Right cardiac atrium (tissue), 5 donors: ENCODE measurements at regions of chr22 and their contacts with region 1.

Region 1: DNA sequence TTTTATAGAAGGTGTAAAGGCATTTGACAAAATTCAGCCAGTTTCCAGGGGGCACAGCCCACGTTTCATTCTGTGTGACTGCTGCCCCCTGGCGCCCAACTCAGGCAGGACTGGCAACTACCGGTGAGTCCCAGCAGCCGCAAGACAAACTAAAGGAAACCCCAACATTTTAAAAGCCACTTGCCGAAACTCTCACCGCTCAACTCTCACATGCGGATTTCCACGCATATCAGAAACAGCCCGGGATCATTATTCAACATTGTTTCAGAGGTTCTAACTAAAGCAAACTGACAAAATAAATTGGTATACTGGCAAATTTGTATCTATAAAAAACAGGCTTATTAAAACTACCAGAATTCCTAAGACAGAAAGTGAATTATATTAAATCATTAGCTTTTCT is 48.2 kb downstream of the MORC2 start:
- DNase-seq: peak; percentile 82 to 95 (median 92)
- ATAC-seq: peak; percentile 70 to 82
- H3K4me3 ChIP-seq: peak overlapping the region; percentile 18
- H3K27ac ChIP-seq: no peak overlapping the region
- H3K4me1 ChIP-seq: peaks cover 2% of the 10 kb centered on the region
- H3K27me3 ChIP-seq: no peaks in the 10 kb centered on the region

Region 2: GRCh38 chr22:30634471-30635233 is 285.8 kb before region 1 on chr22:
- intact Hi-C with region 1: loop called in 2 of 4 experiments (anchors 2 to 10 kb)
- DNase-seq: peak; percentile 87 to 93 (median 92)
- ATAC-seq: peak; percentile 75 to 89
- H3K4me3 ChIP-seq: peak overlapping the region; percentile 29
- H3K27ac ChIP-seq: peak overlapping the region; percentile 88
- H3K4me1 ChIP-seq: peaks cover 12% of the 10 kb centered on the region
- H3K27me3 ChIP-seq: no peaks in the 10 kb centered on the region

Region 3: GRCh38 chr22:30763815-30764686 is 156.4 kb before region 1 on chr22:
- intact Hi-C with region 1: loop called (anchors 2 to 5 kb)
- DNase-seq: peak in 2 of 3 donors; percentile 31 to 57
- ATAC-seq: peak; percentile 66 to 71
- H3K4me3 ChIP-seq: no peak overlapping the region
- H3K27ac ChIP-seq: no peak overlapping the region
- H3K4me1 ChIP-seq: no peaks in the 10 kb centered on the region
- H3K27me3 ChIP-seq: no peaks in the 10 kb centered on the region